ENCODE measurements at regions of chr3 and their contacts with region 1.

Region 1: DNA sequence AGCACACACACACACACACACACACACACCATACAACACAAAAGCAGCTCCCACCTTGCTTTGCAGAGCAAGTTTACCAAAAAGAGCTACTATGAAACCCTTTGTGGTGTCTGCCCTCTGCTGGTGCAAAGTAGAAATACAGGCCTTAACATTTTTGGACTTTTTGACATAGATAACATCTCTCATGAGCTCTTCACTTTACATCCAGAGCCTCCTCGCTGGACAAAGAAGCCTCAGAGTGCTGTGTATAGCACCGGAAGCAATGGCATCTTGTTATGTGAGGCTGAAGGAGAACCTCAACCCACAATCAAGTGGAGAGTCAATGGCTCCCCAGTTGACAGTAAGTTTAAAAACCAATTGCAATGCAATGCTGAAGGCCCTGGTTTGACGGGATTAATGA is 157.9 kb downstream of the CHL1 start:
- DNase-seq: peak; percentile 50 to 68 (median 52)
- H3K4me3 ChIP-seq: no peak overlapping the region
- H3K27ac ChIP-seq: no peak overlapping the region
- H3K4me1 ChIP-seq: no peaks in the 10 kb centered on the region
- H3K27me3 ChIP-seq: peaks cover 0 to 3% (median 0%) of the 10 kb centered on the region in 5 experiments

Region 2: DNA sequence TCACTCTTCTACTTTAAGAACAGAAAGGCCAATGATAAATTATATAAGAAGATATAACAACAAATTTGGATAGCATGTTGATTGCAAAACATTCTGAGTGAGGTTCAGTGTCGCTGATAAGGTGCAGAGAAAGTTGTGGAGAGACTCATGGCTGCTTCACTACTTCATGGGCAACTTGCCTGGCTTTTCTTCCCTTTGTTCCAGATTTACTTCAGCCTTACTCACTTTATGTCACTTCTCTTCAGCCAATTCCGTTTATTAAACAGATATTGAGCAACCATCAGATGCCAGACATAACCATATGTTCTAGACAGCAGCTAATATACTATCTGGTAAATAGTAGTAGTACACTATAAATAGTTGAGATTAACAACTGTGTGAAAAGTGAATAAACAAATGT is 307.9 kb before region 1 on chr3:
- CTCF ChIA-PET with region 1: interaction called, 114 read pairs
- POLR2A ChIA-PET with region 1: no interaction called
- DNase-seq: no peak
- H3K4me3 ChIP-seq: no peak overlapping the region
- H3K27ac ChIP-seq: no peak overlapping the region
- H3K4me1 ChIP-seq: no peaks in the 10 kb centered on the region
- H3K27me3 ChIP-seq: peaks cover 0 to 3% (median 0%) of the 10 kb centered on the region in 5 experiments

Region 3: DNA sequence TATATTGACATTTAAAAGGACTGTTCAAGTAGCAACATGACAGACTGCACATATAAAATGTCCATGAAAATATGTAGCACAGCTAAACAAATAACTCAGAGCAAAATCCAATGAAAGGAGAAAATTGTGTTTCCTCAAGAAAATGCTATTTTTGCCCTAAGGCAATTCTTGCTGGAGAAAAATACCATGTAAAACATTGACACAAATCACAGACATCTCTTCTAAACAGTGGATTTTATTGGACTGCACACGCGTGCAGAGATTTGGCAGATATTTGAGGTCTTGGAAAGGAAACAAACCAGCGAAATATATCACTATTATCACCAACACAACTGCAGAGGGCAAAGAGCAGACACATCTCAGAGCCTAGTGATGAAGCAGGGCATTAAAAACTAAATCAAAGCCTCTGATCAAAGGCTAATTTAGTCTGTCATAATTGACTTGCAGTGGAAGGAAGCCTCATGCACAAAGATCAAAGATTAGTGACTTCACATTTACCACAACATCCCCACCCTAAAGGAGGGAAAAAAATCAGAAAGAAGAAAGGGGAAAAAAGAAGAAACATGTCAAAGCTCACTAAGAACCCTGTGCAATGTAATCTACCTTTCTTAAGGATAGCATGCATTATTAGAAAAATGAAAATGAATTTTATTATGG is 105.4 kb before region 1 on chr3:
- CTCF ChIA-PET with region 1: no interaction called
- POLR2A ChIA-PET with region 1: no interaction called
- DNase-seq: no peak
- H3K4me3 ChIP-seq: no peak overlapping the region
- H3K27ac ChIP-seq: no peak overlapping the region
- H3K4me1 ChIP-seq: no peaks in the 10 kb centered on the region
- H3K27me3 ChIP-seq: no peaks in the 10 kb centered on the region

Region 4: DNA sequence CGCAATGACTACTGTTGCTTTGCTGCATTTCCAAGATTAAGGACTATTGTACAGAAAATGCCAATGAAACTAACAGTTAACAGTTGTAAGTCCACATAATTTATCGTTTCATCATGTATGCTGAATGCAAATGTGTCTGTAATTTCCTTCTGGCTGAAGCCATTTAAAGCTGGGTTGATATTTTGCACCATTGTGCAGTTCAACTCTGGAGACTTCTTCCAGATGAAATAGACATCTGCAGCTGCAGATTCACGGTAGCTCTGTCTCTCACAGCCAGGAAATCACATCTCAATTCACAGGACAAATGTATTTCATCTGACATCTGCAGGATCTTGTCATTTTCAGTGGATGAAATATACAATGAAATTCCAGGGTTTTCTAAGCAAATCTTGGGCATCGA is 12.4 kb before region 1 on chr3:
- CTCF ChIA-PET with region 1: interaction called, 12 read pairs
- POLR2A ChIA-PET with region 1: no interaction called
- DNase-seq: no peak
- H3K4me3 ChIP-seq: no peak overlapping the region
- H3K27ac ChIP-seq: no peak overlapping the region
- H3K4me1 ChIP-seq: no peaks in the 10 kb centered on the region
- H3K27me3 ChIP-seq: no peaks in the 10 kb centered on the region

Measured in common myeloid progenitor, CD34-positive (primary cell).